CD4-positive, alpha-beta T cell (primary cell): ENCODE measurements at regions of chr12 and their contacts with region 1.

Region 1: GRCh38 chr12:123457980-123458783 is at the start of gene SNRNP35:
- DNase-seq: peak; percentile 73 to 93 (median 84)
- ATAC-seq: peak; percentile 77
- H3K4me3 ChIP-seq: peak within 1 kb of the TSS; percentile 93
- H3K4me3 Mint-ChIP-seq: peak within 1 kb of the TSS; percentile 100
- H3K27ac ChIP-seq: peak within 1 kb of the TSS; percentile 98 to 100
- H3K27ac Mint-ChIP-seq: peak within 1 kb of the TSS; percentile 100
- H3K4me1 ChIP-seq: peaks cover 38% of the 10 kb centered on the region
- H3K4me1 Mint-ChIP-seq: peaks cover 34% of the 10 kb centered on the region
- H3K27me3 ChIP-seq: no peaks in the 10 kb centered on the region
- H3K27me3 Mint-ChIP-seq: no peaks in the 10 kb centered on the region
- CTCF ChIP-seq: no peak
- total RNA-seq, gene SNRNP35: 26.2 to 28.6 TPM

Region 2: GRCh38 chr12:122427412-122427811 is 1030.8 kb before region 1 on chr12:
- CTCF ChIA-PET with region 1: no interaction called
- POLR2A ChIA-PET with region 1: no interaction called
- intact Hi-C with region 1: no loop called
- DNase-seq: no peak
- ATAC-seq: no peak
- H3K4me3 ChIP-seq: no peak overlapping the region
- H3K4me3 Mint-ChIP-seq: no peak overlapping the region
- H3K27ac ChIP-seq: no peak overlapping the region
- H3K27ac Mint-ChIP-seq: no peak overlapping the region
- H3K4me1 ChIP-seq: peaks cover 12% of the 10 kb centered on the region
- H3K4me1 Mint-ChIP-seq: peaks cover 13% of the 10 kb centered on the region
- H3K27me3 ChIP-seq: no peaks in the 10 kb centered on the region
- H3K27me3 Mint-ChIP-seq: no peaks in the 10 kb centered on the region
- CTCF ChIP-seq: no peak

Region 3: GRCh38 chr12:123436017-123436964 is 21.9 kb before region 1 on chr12 and contains the start of gene RILPL2:
- CTCF ChIA-PET with region 1: interaction called, 4 read pairs
- POLR2A ChIA-PET with region 1: interaction called, 16 read pairs
- intact Hi-C with region 1: no loop called
- DNase-seq: peak; percentile 78 to 97 (median 89)
- ATAC-seq: peak; percentile 87
- H3K4me3 ChIP-seq: peak within 1 kb of the TSS; percentile 94
- H3K4me3 Mint-ChIP-seq: peak within 1 kb of the TSS; percentile 95
- H3K27ac ChIP-seq: peak within 1 kb of the TSS; percentile 86 to 90
- H3K27ac Mint-ChIP-seq: peak within 1 kb of the TSS; percentile 80
- H3K4me1 ChIP-seq: peaks cover 59% of the 10 kb centered on the region
- H3K4me1 Mint-ChIP-seq: peaks cover 40% of the 10 kb centered on the region
- H3K27me3 ChIP-seq: no peaks in the 10 kb centered on the region
- H3K27me3 Mint-ChIP-seq: no peaks in the 10 kb centered on the region
- CTCF ChIP-seq: no peak
- total RNA-seq, gene RILPL2: 4.9 to 5.5 TPM

Region 4: GRCh38 chr12:123474485-123475245 is 16.5 kb after region 1 on chr12:
- CTCF ChIA-PET with region 1: interaction called, 6 read pairs
- POLR2A ChIA-PET with region 1: interaction called, 40 read pairs
- intact Hi-C with region 1: no loop called
- DNase-seq: peak in 8 of 14 experiments; percentile 11 to 61 (median 34)
- ATAC-seq: peak; percentile 91
- H3K4me3 ChIP-seq: no peak overlapping the region
- H3K4me3 Mint-ChIP-seq: peak overlapping the region; percentile 74
- H3K27ac ChIP-seq: peak overlapping the region; percentile 45 to 49
- H3K27ac Mint-ChIP-seq: peak overlapping the region; percentile 90
- H3K4me1 ChIP-seq: peaks cover 27% of the 10 kb centered on the region
- H3K4me1 Mint-ChIP-seq: peaks cover 26% of the 10 kb centered on the region
- H3K27me3 ChIP-seq: no peaks in the 10 kb centered on the region
- H3K27me3 Mint-ChIP-seq: no peaks in the 10 kb centered on the region
- CTCF ChIP-seq: no peak

Region 5: GRCh38 chr12:123580772-123581171 is 122.6 kb after region 1 on chr12:
- CTCF ChIA-PET with region 1: interaction called, 3 read pairs
- POLR2A ChIA-PET with region 1: no interaction called
- intact Hi-C with region 1: loop called in 1 of 2 experiments (anchors 5 kb)
- DNase-seq: no peak
- ATAC-seq: no peak
- H3K4me3 ChIP-seq: no peak overlapping the region
- H3K4me3 Mint-ChIP-seq: peak overlapping the region; percentile 20
- H3K27ac ChIP-seq: no peak overlapping the region
- H3K27ac Mint-ChIP-seq: no peak overlapping the region
- H3K4me1 ChIP-seq: peaks cover 28% of the 10 kb centered on the region
- H3K4me1 Mint-ChIP-seq: peaks cover 26% of the 10 kb centered on the region
- H3K27me3 ChIP-seq: no peaks in the 10 kb centered on the region
- H3K27me3 Mint-ChIP-seq: no peaks in the 10 kb centered on the region
- CTCF ChIP-seq: no peak

Region 6: GRCh38 chr12:124087266-124088051 is 629.3 kb after region 1 on chr12:
- CTCF ChIA-PET with region 1: no interaction called
- POLR2A ChIA-PET with region 1: no interaction called
- intact Hi-C with region 1: no loop called
- DNase-seq: no peak
- ATAC-seq: no peak
- H3K4me3 ChIP-seq: no peak overlapping the region
- H3K4me3 Mint-ChIP-seq: no peak overlapping the region
- H3K27ac ChIP-seq: no peak overlapping the region
- H3K27ac Mint-ChIP-seq: no peak overlapping the region
- H3K4me1 ChIP-seq: no peaks in the 10 kb centered on the region
- H3K4me1 Mint-ChIP-seq: no peaks in the 10 kb centered on the region
- H3K27me3 ChIP-seq: peaks cover 0 to 8% of the 10 kb centered on the region in 2 experiments
- H3K27me3 Mint-ChIP-seq: no peaks in the 10 kb centered on the region
- CTCF ChIP-seq: no peak